ENCODE measurements at regions of chr16 and their contacts with region 1.

Region 1: GRCh38 chr16:4475880-4476788 is at the start of gene HMOX2:
- DNase-seq: peak; percentile 87 to 94 (median 92)
- ATAC-seq: peak; percentile 77 to 80
- H3K4me3 Mint-ChIP-seq: peak within 1 kb of the TSS; percentile 85 to 97 (median 91)
- H3K27ac Mint-ChIP-seq: peak within 1 kb of the TSS; percentile 89 to 96 (median 94)
- H3K4me1 Mint-ChIP-seq: peaks cover 16 to 60% (median 50%) of the 10 kb centered on the region in 4 donors
- H3K27me3 Mint-ChIP-seq: no peaks in the 10 kb centered on the region
- polyA plus RNA-seq, gene HMOX2: 123 to 210 (median 145) TPM

Region 2: GRCh38 chr16:4339909-4340308 is 136.2 kb before region 1 on chr16:
- POLR2A ChIA-PET with region 1: no interaction called
- DNase-seq: no peak
- ATAC-seq: no peak
- H3K4me3 Mint-ChIP-seq: no peak overlapping the region
- H3K27ac Mint-ChIP-seq: peak overlapping the region in 2 of 10 donors; percentile 34 to 43
- H3K4me1 Mint-ChIP-seq: peaks cover 4 to 10% (median 6%) of the 10 kb centered on the region in 4 donors
- H3K27me3 Mint-ChIP-seq: no peaks in the 10 kb centered on the region

Region 3: DNA sequence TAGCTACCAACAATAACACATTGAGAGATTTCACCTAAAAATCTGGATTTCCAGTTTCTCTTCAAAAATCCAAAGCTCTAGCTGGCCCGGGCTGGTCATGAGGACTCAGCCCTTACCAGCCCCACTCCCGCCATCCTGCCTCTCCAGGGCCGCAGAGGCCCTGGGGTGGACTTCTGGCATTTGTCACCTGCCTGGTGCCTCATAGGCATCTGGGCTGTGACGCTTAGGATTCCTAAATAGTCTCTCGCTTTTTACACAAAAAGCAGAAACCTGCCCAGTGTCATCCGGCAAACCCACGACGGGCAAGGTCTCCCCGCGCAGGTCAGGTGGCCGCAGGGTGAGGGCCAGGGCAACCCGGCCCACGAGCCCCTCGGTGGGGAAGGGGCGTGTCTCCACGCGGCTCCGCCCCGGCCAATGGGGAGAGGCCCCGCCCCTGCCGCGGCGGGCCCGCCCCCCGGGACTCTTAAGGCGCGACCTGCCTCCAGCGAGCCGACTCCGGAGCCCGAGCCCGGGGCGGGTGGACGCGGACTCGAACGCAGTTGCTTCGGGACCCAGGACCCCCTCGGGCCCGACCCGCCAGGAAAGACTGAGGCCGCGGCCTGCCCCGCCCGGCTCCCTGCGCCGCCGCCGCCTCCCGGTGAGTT is 104.7 kb before region 1 on chr16 and contains the start of gene VASN:
- POLR2A ChIA-PET with region 1: no interaction called
- DNase-seq: peak; percentile 61 to 84 (median 78)
- ATAC-seq: peak; percentile 84 to 90
- H3K4me3 Mint-ChIP-seq: peak within 1 kb of the TSS; percentile 73 to 91 (median 83)
- H3K27ac Mint-ChIP-seq: peak within 1 kb of the TSS in 7 of 10 donors; percentile 44 to 93 (median 85)
- H3K4me1 Mint-ChIP-seq: peaks cover 11 to 35% (median 21%) of the 10 kb centered on the region in 4 donors
- H3K27me3 Mint-ChIP-seq: no peaks in the 10 kb centered on the region
- polyA plus RNA-seq, gene VASN: 0.12 TPM in 1 of 3 donors, not detected in the others

Region 4: DNA sequence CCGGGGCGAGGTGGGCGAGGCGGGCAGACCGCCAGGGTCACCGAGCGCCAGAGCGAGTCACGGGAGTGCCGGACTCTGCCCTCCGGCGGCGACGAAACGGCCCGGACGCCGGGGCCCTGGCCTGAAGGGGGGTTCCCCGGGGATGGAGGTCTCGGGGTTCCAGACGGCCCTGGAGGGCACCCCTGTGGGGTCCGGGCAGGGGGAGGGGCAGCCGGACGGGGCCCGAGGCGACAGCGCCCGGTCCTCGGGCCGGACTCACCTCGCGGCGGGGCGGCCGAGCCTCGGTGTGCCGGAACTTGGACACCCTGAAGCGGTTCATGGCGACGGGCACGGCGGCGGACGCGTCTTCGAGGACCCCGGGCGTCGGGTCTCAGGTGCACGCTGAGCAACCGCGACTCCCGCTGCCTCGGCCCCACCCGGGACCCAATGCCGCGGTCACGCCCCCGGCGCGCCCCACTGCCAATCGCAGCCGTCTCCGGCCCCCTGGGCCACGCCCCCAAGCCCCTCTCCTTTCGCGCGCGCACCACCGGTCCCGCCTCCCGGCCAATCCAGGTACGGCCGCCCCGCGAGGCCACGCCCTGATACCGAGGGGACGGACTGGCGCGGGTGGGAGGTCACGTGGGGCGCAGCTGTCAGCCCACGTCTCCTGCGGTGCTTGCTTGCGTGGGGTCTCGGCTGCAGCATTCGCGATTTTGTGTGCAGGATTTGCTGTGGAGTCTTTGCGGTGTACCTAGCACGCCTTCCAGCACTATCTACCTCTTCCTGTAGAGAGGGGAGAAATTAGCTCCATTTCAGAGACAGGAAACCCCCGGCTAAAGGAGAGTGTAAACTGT is 59.7 kb before region 1 on chr16 and contains the start of gene CORO7:
- POLR2A ChIA-PET with region 1: interaction called, 13 read pairs
- DNase-seq: peak; percentile 98 to 100 (median 100)
- ATAC-seq: peak; percentile 68 to 69
- H3K4me3 Mint-ChIP-seq: peak within 1 kb of the TSS; percentile 92 to 99 (median 96)
- H3K27ac Mint-ChIP-seq: peak within 1 kb of the TSS; percentile 92 to 100 (median 99)
- H3K4me1 Mint-ChIP-seq: peaks cover 17 to 43% (median 34%) of the 10 kb centered on the region in 4 donors
- H3K27me3 Mint-ChIP-seq: no peaks in the 10 kb centered on the region
- polyA plus RNA-seq, gene CORO7: 44.6 to 79.9 (median 45.5) TPM

Region 5: GRCh38 chr16:4461250-4462085 is 14.7 kb before region 1 on chr16:
- POLR2A ChIA-PET with region 1: interaction called, 11 read pairs
- DNase-seq: no peak
- ATAC-seq: no peak
- H3K4me3 Mint-ChIP-seq: no peak overlapping the region
- H3K27ac Mint-ChIP-seq: peak overlapping the region in 8 of 10 donors; percentile 28 to 92 (median 78)
- H3K4me1 Mint-ChIP-seq: peaks cover 11 to 33% (median 22%) of the 10 kb centered on the region in 4 donors
- H3K27me3 Mint-ChIP-seq: no peaks in the 10 kb centered on the region

Region 6: DNA sequence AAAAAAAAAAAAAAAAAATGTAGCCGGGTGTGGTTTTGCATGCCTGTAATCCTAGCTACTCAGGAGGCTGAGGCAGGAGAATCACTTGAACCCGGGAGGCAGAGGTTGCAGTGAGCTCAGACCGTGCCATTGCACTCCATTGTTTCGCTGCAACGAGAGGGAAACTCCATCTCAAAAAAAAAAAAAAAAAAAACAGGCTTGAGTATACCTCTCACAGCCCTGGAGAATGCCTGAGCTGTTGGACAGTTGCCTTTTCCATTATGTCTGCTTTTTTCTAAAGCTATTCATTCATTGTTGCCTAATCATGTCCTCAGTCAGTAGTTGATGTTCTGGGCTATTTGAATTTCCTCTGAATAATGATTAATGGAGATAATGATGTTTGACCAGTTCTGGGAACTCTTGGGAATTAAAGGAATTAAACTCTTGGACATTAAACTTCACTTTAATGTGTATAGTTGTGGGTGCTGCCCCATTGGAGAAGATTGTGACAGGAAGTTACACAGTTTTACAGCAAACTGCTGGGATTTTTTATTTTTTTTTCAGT is 11.9 kb after region 1 on chr16:
- POLR2A ChIA-PET with region 1: interaction called, 120 read pairs
- DNase-seq: peak in 1 of 10 donors; percentile 38
- ATAC-seq: peak; percentile 42 to 47
- H3K4me3 Mint-ChIP-seq: peak overlapping the region; percentile 54 to 78 (median 74)
- H3K27ac Mint-ChIP-seq: peak overlapping the region; percentile 91 to 99 (median 96)
- H3K4me1 Mint-ChIP-seq: peaks cover 22 to 79% (median 65%) of the 10 kb centered on the region in 4 donors
- H3K27me3 Mint-ChIP-seq: no peaks in the 10 kb centered on the region

Region 7: DNA sequence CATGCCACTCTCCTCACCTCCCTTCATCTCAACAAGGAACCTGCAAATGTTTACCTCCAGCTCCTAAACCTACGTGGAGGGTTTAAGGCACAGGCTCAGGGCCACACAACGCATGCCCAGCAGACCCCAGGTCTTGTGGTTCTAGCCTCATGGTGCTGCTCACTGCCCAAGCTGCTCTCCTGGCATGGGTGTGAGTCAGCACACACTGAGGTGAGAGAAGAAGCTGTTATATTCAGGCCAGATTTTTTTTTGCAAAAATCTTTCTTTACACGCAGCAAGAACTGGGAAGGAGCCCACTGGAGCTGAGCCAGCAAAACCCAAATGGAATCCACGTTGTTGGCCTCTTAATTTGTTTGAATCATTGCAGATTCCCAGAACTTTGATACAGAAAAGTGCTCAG is 74.5 kb after region 1 on chr16:
- POLR2A ChIA-PET with region 1: interaction called, 25 read pairs
- DNase-seq: no peak
- ATAC-seq: no peak
- H3K4me3 Mint-ChIP-seq: no peak overlapping the region
- H3K27ac Mint-ChIP-seq: peak overlapping the region in 2 of 10 donors; percentile 26 to 70
- H3K4me1 Mint-ChIP-seq: peaks cover 2 to 9% (median 6%) of the 10 kb centered on the region in 4 donors
- H3K27me3 Mint-ChIP-seq: no peaks in the 10 kb centered on the region

Measured in naive thymus-derived CD8-positive, alpha-beta T cell (primary cell).